ENCODE measurements at regions of chr20 and their contacts with region 1.

Region 1: DNA sequence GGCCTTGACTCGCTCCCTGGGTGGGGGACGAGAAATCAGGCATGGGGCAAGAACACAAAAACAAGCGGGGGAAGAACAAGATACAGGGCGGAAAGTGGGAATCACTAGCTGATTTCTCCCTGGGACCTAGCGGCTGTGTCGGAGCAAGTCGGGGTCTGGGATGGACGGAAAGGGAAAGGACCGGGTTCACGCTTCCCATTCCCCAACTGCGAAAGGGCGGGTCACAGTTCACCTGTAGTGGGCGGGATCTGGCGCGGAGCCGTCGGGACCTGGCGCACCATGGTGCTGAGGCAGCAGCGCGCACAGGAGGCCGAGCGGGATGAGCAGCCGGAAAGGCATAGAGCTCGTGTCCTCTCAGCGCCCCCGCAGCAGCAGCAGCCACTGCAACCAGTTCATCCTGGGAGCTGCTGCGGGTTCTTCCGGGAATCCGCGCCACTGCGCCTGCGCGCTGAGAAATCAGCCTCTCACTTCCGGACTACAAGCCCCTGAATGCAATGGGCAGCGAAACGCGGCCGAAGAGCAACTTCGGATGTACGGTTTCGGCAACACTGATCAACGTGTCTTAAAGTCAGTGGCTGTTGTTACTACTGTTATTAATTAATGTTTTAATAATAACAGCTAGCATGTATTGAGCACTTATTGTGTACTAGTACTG is at the start of gene EDEM2:
- DNase-seq: peak; percentile 95
- H3K4me3 ChIP-seq: peak within 1 kb of the TSS; percentile 90
- H3K27ac ChIP-seq: peak within 1 kb of the TSS; percentile 87
- H3K4me1 ChIP-seq: peaks cover 45% of the 10 kb centered on the region
- H3K27me3 ChIP-seq: no peaks in the 10 kb centered on the region
- CTCF ChIP-seq: no peak
- total RNA-seq, gene EDEM2: 10.4 TPM

Region 2: DNA sequence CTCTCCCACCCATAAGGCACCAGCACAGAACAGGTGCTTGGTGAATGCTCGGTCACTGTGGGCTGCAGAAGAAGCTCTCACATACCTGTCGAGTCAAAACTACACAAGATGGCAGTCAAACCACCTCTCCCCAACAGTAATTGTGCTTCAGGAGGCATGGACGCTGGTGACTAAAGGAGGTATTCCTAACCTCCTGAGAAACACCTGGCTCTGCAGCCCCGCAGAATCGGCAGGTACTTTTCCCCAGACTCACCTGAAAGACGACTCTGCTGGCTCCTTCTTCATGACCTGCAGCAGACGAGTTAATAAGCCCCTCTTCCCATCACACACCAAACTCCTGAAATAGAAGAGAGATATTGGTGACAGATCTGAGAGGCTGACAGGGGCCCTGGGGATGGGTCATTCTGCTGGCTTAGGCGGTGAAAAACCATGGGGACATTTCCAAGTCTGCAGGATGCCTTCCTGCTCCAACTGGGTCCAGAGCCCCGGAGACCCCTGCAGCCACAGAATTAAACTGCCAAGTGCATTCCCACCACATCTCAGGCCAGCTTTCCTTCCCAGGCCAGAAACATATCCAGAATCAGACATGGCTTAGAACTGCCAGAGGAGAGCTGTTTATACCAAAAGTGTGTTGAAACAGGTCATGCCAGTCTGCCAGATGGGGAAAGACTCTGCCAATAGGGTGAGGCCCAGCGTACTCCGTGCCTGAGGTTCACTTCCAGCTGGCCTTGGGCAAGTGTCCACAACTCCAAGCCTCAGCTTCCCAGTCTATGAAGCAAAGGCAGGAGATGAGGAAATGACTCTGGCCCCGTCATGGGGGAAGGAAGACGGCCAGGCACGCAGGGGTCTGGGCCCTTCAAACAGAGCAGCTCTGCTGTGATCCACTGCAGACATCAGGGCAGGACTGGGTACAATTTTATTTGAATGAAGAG is 138.4 kb before region 1 on chr20:
- intact Hi-C with region 1: no loop called
- DNase-seq: no peak
- H3K4me3 ChIP-seq: no peak overlapping the region
- H3K27ac ChIP-seq: peak overlapping the region; percentile 21
- H3K4me1 ChIP-seq: peaks cover 55% of the 10 kb centered on the region
- H3K27me3 ChIP-seq: no peaks in the 10 kb centered on the region
- CTCF ChIP-seq: no peak

Region 3: DNA sequence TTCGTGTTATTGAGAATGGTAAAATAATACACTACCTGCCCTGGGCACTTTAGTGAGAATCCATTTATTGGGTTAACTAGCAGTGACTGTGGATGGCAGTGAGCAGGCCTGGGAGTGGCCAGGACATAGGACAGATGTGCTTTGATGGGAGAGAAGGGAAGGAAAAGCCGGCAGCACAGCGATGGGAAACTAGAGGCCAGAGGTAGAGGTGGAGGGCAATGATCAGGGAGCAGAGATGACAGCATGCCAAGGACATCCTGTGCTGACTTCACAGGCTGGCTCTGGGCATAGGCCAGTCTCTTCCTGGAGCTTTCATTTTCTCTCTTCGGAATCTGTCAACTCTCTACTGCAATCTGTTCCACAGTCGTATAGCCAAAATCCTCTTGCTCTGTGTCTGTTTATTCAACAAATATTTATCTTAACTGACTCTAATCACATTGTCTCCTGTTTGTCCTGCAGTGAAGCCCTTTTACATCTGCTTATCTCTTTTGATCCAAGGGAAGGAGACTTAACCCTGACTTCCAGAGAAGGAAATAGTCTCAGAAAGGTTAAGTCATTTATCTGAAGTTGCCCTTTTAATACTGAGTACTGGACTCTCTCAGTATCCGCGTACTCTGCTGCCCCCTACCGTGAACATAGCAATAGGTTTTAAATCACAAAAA is 61.0 kb after region 1 on chr20:
- intact Hi-C with region 1: loop called (anchors 5 kb)
- DNase-seq: peak; percentile 78
- H3K4me3 ChIP-seq: peak overlapping the region; percentile 48
- H3K27ac ChIP-seq: peak overlapping the region; percentile 87
- H3K4me1 ChIP-seq: peaks cover 13% of the 10 kb centered on the region
- H3K27me3 ChIP-seq: no peaks in the 10 kb centered on the region
- CTCF ChIP-seq: peak; percentile 86

Region 4: GRCh38 chr20:35235881-35236280 is 88.8 kb after region 1 on chr20:
- intact Hi-C with region 1: no loop called
- DNase-seq: no peak
- H3K4me3 ChIP-seq: no peak overlapping the region
- H3K27ac ChIP-seq: no peak overlapping the region
- H3K4me1 ChIP-seq: no peaks in the 10 kb centered on the region
- H3K27me3 ChIP-seq: no peaks in the 10 kb centered on the region
- CTCF ChIP-seq: no peak

Region 5: DNA sequence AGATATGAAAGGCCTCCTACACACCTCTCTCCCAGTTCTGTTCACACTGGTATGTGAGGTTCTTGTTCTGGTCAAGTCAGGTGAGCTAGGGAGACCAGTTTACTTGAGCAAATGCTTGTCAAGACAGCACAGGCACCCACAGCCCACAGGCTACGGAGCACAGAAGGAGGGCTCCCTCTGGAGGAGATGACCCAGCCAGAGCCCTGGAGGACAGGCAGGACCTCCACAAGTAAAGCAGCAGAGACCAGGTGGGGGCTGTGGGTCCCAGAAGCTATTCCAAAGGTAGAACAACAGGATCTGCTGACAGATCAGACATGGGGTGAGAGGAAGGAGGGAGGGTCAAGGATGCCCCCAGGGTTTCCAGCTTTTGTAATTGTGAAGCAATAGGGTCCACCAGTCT is 117.7 kb after region 1 on chr20:
- intact Hi-C with region 1: loop called (anchors 5 kb)
- DNase-seq: no peak
- H3K4me3 ChIP-seq: no peak overlapping the region
- H3K27ac ChIP-seq: no peak overlapping the region
- H3K4me1 ChIP-seq: peaks cover 19% of the 10 kb centered on the region
- H3K27me3 ChIP-seq: no peaks in the 10 kb centered on the region
- CTCF ChIP-seq: no peak

Region 6: GRCh38 chr20:35303735-35304491 is 156.9 kb after region 1 on chr20:
- intact Hi-C with region 1: no loop called
- DNase-seq: peak; percentile 71
- H3K4me3 ChIP-seq: no peak overlapping the region
- H3K27ac ChIP-seq: no peak overlapping the region
- H3K4me1 ChIP-seq: peaks cover 29% of the 10 kb centered on the region
- H3K27me3 ChIP-seq: no peaks in the 10 kb centered on the region
- CTCF ChIP-seq: peak; percentile 93

Measured in left ventricle myocardium inferior (tissue), 1 donor.